Adrenal gland (tissue), 19 donors: ENCODE measurements at regions of chr2 and their contacts with region 1.

Region 1: GRCh38 chr2:190088917-190089316 is 26.4 kb upstream of the MSTN start:
- DNase-seq: peak; percentile 38 to 75 (median 52)
- H3K4me3 ChIP-seq: no peak overlapping the region
- H3K27ac ChIP-seq: no peak overlapping the region
- H3K4me1 ChIP-seq: peaks cover 0 to 15% of the 10 kb centered on the region in 2 donors
- H3K27me3 ChIP-seq: no peaks in the 10 kb centered on the region
- CTCF ChIP-seq: peak; percentile 64 to 82 (median 72)
- POLR2A ChIP-seq: no peak

Region 2: GRCh38 chr2:189641590-189641989 is 447.3 kb before region 1 on chr2:
- intact Hi-C with region 1: no loop called
- DNase-seq: no peak
- H3K4me3 ChIP-seq: no peak overlapping the region
- H3K27ac ChIP-seq: no peak overlapping the region
- H3K4me1 ChIP-seq: no peaks in the 10 kb centered on the region
- H3K27me3 ChIP-seq: no peaks in the 10 kb centered on the region
- CTCF ChIP-seq: no peak
- POLR2A ChIP-seq: no peak

Region 3: GRCh38 chr2:190277234-190278112 is 188.6 kb after region 1 on chr2:
- intact Hi-C with region 1: loop called (anchors 10 kb)
- DNase-seq: peak in 3 of 7 donors; percentile 25 to 62 (median 49)
- H3K4me3 ChIP-seq: no peak overlapping the region
- H3K27ac ChIP-seq: no peak overlapping the region
- H3K4me1 ChIP-seq: peaks cover 0 to 5% of the 10 kb centered on the region in 2 donors
- H3K27me3 ChIP-seq: no peaks in the 10 kb centered on the region
- CTCF ChIP-seq: peak; percentile 32 to 65 (median 50)
- POLR2A ChIP-seq: no peak

Region 4: DNA sequence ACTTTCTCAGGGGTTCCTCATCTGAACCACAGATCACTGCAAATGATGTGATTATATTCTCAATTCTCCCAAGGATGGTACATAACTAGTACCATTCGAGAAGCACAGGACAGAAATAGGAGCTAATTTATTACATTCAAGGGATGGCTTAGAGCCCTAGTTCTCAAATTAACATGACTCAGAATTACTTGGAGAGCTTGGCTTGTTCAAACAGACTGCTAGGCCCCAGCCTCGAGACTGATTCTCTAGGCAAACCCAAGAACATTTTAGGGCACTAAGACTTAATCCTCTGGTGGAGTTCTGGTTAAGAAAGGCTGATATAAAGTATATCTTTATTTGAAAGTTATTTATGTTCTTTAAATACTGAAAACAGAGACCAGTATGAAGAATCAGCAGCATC is 194.9 kb after region 1 on chr2:
- intact Hi-C with region 1: loop called (anchors 10 kb)
- DNase-seq: no peak
- H3K4me3 ChIP-seq: no peak overlapping the region
- H3K27ac ChIP-seq: no peak overlapping the region
- H3K4me1 ChIP-seq: no peaks in the 10 kb centered on the region
- H3K27me3 ChIP-seq: no peaks in the 10 kb centered on the region
- CTCF ChIP-seq: no peak
- POLR2A ChIP-seq: no peak